CD8-positive, alpha-beta T cell (primary cell): ENCODE measurements at regions of chr2 and their contacts with region 1.

Region 1: GRCh38 chr2:120969613-120970355 is 234.1 kb downstream of the GLI2 start:
- DNase-seq: no peak
- ATAC-seq: no peak
- H3K4me3 ChIP-seq: no peak overlapping the region
- H3K4me3 Mint-ChIP-seq: no peak overlapping the region
- H3K27ac ChIP-seq: no peak overlapping the region
- H3K27ac Mint-ChIP-seq: no peak overlapping the region
- H3K4me1 ChIP-seq: no peaks in the 10 kb centered on the region
- H3K4me1 Mint-ChIP-seq: no peaks in the 10 kb centered on the region
- H3K27me3 ChIP-seq: no peaks in the 10 kb centered on the region
- H3K27me3 Mint-ChIP-seq: no peaks in the 10 kb centered on the region
- CTCF ChIP-seq: no peak

Region 2: DNA sequence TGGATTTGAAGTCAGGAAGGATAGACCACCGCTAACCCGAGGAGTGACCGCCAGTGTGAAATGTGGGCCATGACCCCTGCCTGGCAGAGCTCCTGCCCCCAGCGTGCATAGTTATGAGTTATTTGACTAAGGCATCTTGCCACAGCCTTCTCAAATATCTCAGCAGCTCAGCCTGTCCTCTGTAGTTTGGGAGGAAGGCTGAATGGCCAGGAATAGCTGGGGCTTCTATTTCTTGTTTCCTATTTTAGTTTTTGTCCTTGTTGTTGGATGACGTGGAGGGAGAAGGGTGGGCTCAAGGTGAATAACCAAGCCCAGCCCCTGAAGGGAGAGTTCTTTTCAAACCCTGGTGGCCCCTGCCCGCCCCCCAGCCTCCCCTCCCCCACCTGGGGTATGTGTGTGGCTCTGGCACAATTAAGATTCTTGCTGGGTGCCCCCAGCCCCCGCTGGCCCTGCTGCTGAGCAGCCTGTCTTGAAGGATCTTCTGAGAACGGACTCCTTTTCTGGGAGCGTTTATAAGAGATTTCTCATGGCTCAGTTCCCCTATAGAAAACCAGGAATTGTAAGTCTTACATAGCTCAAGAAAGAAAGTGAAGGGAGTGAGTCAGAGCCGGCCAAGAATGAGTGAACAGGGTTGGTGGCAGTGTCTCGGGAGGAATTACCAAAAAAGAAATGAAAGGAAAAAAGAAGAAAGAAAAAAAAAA is 76.7 kb before region 1 on chr2:
- CTCF ChIA-PET with region 1: no interaction called
- POLR2A ChIA-PET with region 1: no interaction called
- intact Hi-C with region 1: no loop called
- DNase-seq: no peak
- ATAC-seq: no peak
- H3K4me3 ChIP-seq: no peak overlapping the region
- H3K4me3 Mint-ChIP-seq: no peak overlapping the region
- H3K27ac ChIP-seq: no peak overlapping the region
- H3K27ac Mint-ChIP-seq: no peak overlapping the region
- H3K4me1 ChIP-seq: no peaks in the 10 kb centered on the region
- H3K4me1 Mint-ChIP-seq: no peaks in the 10 kb centered on the region
- H3K27me3 ChIP-seq: no peaks in the 10 kb centered on the region
- H3K27me3 Mint-ChIP-seq: peaks cover 2% of the 10 kb centered on the region
- CTCF ChIP-seq: no peak

Region 3: DNA sequence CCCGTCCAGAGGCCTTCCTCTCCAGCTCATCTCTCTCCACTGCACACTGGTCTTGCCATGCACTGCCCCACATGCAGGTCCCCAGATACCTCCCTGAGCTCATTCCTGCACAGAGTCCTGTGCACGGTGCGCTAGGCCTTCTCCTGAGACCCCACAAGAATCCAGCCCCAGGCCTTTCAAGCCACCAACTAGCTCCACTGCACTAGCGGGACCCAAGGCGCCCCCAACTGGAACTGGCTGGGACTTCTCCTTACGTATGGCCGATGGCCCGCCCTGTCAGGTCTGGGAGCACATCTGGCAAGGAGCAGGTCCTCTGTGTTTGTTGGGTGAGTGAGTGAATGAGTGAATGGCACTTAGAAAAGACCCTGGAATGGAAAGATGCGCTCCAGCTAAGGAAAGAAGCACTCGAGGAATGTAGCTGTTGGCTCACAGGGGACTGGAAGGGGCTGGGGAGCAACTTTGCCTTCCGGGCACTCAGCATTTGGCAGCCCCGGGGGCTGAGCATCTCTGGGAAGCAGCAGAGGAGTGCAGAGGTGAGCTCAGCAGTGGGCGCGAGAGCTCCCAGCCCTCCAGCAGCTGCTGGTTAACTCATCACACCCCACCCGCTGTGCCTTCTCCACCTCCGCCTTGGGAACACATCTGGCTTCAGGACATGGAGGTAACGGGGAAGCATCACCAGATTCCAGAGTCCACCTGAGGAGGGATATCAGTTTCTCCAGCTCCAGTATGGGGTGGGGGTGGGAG is 11.0 kb before region 1 on chr2:
- CTCF ChIA-PET with region 1: no interaction called
- POLR2A ChIA-PET with region 1: no interaction called
- intact Hi-C with region 1: no loop called
- DNase-seq: no peak
- ATAC-seq: no peak
- H3K4me3 ChIP-seq: no peak overlapping the region
- H3K4me3 Mint-ChIP-seq: no peak overlapping the region
- H3K27ac ChIP-seq: no peak overlapping the region
- H3K27ac Mint-ChIP-seq: no peak overlapping the region
- H3K4me1 ChIP-seq: no peaks in the 10 kb centered on the region
- H3K4me1 Mint-ChIP-seq: no peaks in the 10 kb centered on the region
- H3K27me3 ChIP-seq: no peaks in the 10 kb centered on the region
- H3K27me3 Mint-ChIP-seq: peaks cover 2% of the 10 kb centered on the region
- CTCF ChIP-seq: no peak

Region 4: DNA sequence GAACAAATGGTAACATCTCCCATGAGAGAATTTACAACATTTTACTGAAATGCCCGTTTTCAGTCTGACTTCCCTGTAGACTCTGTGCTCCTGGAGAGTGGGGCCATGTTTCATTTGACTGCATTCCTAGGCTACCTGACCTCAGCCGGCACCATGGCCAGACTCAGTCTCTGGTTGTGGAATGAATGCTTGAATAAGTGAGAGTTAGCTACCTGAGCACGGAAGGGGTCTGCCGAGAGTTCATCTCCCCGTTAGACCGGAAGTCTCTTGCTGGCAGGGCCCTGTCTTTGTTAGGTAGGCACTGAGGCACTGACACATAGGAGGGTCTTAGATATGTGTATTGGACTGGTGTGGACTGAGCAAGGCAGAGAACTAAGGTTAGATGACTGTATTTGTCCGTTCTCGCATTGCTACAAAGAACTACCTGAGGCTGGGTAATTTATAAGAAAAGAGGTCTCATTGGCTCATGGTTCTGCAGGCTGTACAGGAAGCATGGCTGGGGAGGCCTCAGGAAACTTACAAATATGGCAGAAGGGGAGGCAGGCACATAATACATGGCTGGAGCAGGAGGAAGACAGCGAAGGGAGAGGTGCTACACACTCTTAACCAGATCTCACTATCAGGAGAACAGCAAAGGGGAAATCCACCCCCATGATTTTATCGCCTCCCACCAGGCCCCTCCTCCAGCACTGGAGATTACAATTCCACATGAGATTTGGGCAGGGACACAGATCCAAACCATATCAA is 37.1 kb after region 1 on chr2:
- CTCF ChIA-PET with region 1: no interaction called
- POLR2A ChIA-PET with region 1: no interaction called
- intact Hi-C with region 1: loop called in 1 of 2 experiments (anchors 1 kb)
- DNase-seq: no peak
- ATAC-seq: no peak
- H3K4me3 ChIP-seq: no peak overlapping the region
- H3K4me3 Mint-ChIP-seq: no peak overlapping the region
- H3K27ac ChIP-seq: no peak overlapping the region
- H3K27ac Mint-ChIP-seq: no peak overlapping the region
- H3K4me1 ChIP-seq: no peaks in the 10 kb centered on the region
- H3K4me1 Mint-ChIP-seq: no peaks in the 10 kb centered on the region
- H3K27me3 ChIP-seq: peaks cover 0 to 3% of the 10 kb centered on the region in 2 experiments
- H3K27me3 Mint-ChIP-seq: peaks cover 10% of the 10 kb centered on the region
- CTCF ChIP-seq: no peak

Region 5: DNA sequence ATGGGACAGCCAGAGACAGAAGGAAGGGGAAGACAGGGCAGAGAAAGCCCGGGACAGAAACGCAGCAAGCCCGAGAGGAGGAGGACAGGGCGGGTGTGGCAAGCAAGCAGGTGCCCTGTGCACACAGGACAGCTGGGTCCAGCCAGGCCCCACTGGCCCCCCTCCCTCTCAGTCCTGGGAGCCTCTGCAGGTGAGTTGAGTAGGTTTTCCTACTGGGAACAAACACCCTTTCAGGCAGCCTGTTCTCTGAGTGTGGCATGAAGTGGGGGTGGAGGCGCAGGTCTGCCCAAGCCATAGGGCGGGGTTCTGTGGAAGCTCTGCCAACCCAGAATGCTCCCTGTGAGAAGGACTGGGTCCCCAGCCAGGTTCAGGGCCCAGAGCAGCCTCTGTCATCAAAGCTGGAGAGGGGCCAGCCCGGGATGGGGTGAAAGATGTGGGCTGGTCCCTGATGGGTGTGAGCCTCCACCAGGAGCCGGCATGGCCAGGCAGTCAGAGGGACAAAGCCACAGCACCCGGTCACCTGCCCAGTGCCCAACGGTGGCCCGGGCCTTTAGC is 185.8 kb after region 1 on chr2:
- CTCF ChIA-PET with region 1: no interaction called
- POLR2A ChIA-PET with region 1: no interaction called
- intact Hi-C with region 1: no loop called
- DNase-seq: no peak
- ATAC-seq: no peak
- H3K4me3 ChIP-seq: no peak overlapping the region
- H3K4me3 Mint-ChIP-seq: no peak overlapping the region
- H3K27ac ChIP-seq: no peak overlapping the region
- H3K27ac Mint-ChIP-seq: no peak overlapping the region
- H3K4me1 ChIP-seq: no peaks in the 10 kb centered on the region
- H3K4me1 Mint-ChIP-seq: no peaks in the 10 kb centered on the region
- H3K27me3 ChIP-seq: no peaks in the 10 kb centered on the region
- H3K27me3 Mint-ChIP-seq: no peaks in the 10 kb centered on the region
- CTCF ChIP-seq: no peak